Activated CD4-positive, alpha-beta T cell treated with anti-CD3 and anti-CD28 coated beads, Interleukin-2, amount 10 ng/mL, durations not matched to agents 24 days and 14 days (primary cell): ENCODE measurements at regions of chr2 and their contacts with region 1.

Region 1: DNA sequence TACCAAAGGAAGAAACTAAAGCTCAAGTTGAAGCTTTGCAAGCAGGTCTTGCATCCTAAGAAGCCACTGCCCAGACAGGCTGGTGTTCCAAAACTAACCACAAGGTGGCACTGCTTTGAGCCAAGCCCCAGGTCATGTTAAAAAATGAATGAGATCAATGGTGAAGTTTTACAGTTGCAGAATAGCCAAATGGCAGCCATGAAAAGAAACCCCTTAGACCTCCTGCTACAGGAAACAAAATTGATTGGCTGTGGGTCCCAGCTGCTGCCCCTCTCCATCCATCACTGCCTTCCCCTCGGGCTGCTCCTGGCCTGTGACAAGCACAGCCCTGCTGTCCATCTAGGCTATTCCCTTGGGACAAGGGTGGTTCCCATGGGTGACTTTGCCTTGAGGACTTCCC is 20.7 kb upstream of the MREG start:
- DNase-seq: peak; percentile 94
- H3K4me3 Mint-ChIP-seq: no peak overlapping the region
- H3K27ac Mint-ChIP-seq: no peak overlapping the region
- H3K4me1 Mint-ChIP-seq: peaks cover 36% of the 10 kb centered on the region
- H3K27me3 Mint-ChIP-seq: no peaks in the 10 kb centered on the region

Region 2: DNA sequence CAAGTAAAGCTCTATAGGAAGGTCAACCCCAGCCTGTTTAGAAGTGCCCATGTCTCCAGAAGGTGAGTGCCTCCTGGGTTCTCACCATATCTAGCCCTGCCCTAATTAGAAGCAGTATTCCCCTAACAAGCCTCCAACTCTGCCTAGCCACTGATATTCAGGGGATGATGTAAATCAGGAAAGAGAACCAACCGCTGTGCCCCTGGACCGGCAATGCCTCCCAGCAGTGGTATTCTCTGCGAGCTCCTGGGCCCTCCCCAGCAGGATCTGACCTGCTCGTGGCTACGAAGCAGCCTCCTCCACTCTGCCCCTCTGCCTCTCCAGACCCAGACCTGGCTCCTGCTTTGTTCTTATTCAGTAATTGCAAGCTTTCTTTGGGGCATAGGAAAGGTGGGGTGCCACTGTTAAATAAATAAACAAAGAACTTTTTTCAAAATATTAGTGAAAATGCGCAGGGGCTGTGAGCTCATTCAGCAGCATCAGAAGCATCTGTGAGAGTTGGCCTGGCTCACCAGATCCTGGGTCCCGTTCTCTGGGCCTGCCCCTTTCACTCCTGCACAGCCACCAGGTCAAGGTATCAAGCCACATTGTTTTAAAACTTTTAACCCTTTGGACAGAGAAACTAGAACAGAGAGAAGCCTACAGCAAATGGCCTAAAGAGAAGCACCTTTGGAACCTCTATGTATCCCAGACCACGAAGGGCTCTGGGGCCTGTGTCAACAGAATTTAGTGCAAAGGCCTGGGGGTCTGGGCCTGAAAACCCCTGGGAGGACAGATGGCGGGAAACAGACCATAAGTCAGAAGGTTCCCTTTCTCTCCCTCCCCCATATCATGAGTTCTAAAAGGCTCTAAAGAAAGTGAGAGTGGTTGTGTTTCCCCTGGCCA is 32.6 kb before region 1 on chr2:
- intact Hi-C with region 1: no loop called
- DNase-seq: no peak
- H3K4me3 Mint-ChIP-seq: no peak overlapping the region
- H3K27ac Mint-ChIP-seq: no peak overlapping the region
- H3K4me1 Mint-ChIP-seq: peaks cover 33% of the 10 kb centered on the region
- H3K27me3 Mint-ChIP-seq: no peaks in the 10 kb centered on the region

Region 3: DNA sequence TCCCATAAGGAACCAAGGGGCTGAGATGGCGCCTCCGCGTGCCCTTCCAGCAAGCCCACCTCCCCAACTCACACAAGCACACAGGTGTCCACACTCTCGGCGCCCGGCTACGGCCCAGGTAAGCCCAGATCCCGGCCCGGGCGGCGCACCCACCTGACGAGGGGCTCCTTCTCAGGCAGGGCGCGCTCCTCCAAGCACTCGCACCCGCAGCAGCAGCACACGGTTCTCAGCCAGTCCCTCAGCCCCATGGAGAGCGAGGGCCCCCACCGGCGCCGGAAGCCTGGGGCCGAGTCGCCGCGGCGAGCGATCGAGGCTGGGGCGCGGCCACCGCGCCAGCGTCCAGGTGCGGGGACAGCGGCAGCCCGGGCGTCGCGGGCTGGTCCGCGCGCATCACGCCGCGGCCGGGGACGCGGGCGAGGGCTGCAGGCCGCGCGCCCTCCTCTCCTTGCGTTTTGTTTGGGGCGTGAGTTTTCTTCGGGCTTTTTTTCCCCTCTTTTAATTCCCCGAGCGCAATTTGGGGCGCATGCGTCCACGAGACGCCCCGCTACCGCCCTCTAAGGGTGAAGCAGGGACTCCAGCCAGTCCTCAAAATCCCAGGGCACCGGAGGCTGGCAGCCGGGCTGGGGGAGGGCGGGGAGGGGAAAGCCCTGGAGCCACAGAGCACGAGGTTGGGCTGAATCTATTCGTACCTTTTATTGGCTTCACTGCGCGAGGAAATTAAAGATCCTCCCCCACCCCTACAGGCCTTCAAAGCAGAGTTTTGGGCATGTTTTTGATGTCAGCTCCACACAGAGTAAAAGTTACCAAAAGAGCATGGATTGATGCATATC is 20.8 kb before region 1 on chr2 and contains the start of gene MREG:
- intact Hi-C with region 1: loop called (anchors 1 kb)
- DNase-seq: peak; percentile 95
- H3K4me3 Mint-ChIP-seq: peak within 1 kb of the TSS; percentile 90
- H3K27ac Mint-ChIP-seq: peak within 1 kb of the TSS; percentile 71
- H3K4me1 Mint-ChIP-seq: peaks cover 47% of the 10 kb centered on the region
- H3K27me3 Mint-ChIP-seq: peaks cover 3% of the 10 kb centered on the region
- total RNA-seq, gene MREG: 10.6 and 10.9 TPM in 2 replicates

Region 4: GRCh38 chr2:216057688-216058193 is 23.7 kb after region 1 on chr2:
- intact Hi-C with region 1: loop called (anchors 1 kb)
- DNase-seq: peak; percentile 90
- H3K4me3 Mint-ChIP-seq: peak overlapping the region; percentile 81
- H3K27ac Mint-ChIP-seq: peak overlapping the region; percentile 92
- H3K4me1 Mint-ChIP-seq: peaks cover 32% of the 10 kb centered on the region
- H3K27me3 Mint-ChIP-seq: no peaks in the 10 kb centered on the region